Heart left ventricle (tissue), 16 donors: ENCODE measurements at regions of chr10 and their contacts with region 1.

Region 1: GRCh38 chr10:101341438-101341837 is 12.5 kb upstream of the BTRC start:
- DNase-seq: no peak
- ATAC-seq: no peak
- H3K4me3 ChIP-seq: no peak overlapping the region
- H3K27ac ChIP-seq: no peak overlapping the region
- H3K4me1 ChIP-seq: no peaks in the 10 kb centered on the region
- H3K27me3 ChIP-seq: peaks cover 0 to 3% (median 0%) of the 10 kb centered on the region in 9 donors
- CTCF ChIP-seq: no peak
- POLR2A ChIP-seq: no peak

Region 2: GRCh38 chr10:101367569-101368453 is 26.4 kb after region 1 on chr10:
- intact Hi-C with region 1: loop called in 1 of 10 experiments (anchors 2 kb)
- DNase-seq: no peak
- ATAC-seq: peak in 1 of 4 donors; percentile 39
- H3K4me3 ChIP-seq: no peak overlapping the region
- H3K27ac ChIP-seq: no peak overlapping the region
- H3K4me1 ChIP-seq: peaks cover 0 to 29% (median 12%) of the 10 kb centered on the region in 12 donors
- H3K27me3 ChIP-seq: no peaks in the 10 kb centered on the region
- CTCF ChIP-seq: no peak
- POLR2A ChIP-seq: no peak

Region 3: DNA sequence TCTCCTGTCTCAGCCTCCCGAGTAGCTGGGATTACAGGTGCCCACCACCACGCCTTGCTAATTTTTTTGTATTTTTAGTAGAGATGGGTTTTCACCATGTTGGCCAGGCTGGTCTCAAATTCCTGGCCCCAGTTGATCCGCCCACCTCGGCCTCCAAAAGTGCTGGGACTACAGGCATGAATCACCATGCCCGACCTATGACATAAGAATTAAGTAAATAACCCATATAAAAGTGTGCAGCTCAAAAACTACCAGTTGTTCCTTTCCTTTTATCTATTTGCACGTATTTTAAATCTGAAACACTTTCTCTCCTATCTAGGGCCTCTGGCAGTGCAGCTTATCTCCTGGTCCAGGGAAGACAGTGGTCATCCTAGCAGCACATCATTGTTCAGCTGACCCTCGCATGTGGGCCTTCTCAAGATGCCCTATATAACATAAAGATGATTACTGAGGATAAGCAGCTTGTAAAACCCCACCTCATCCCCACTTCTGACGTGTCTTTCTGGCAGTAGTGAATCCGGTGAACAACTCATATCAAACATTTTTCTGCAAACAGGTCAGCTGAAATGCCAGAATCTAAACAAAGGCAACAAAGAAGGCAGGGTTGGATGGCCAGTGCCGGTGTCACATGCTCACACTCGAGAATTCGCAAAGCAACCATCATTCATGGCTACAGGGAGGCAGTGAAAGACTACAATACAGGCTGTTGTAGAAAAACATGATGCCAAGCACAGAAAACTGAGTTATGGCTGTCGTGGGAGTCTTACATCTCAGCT is 538.2 kb after region 1 on chr10:
- intact Hi-C with region 1: no loop called
- DNase-seq: no peak
- ATAC-seq: no peak
- H3K4me3 ChIP-seq: no peak overlapping the region
- H3K27ac ChIP-seq: no peak overlapping the region
- H3K4me1 ChIP-seq: peaks cover 0 to 30% (median 6%) of the 10 kb centered on the region in 12 donors
- H3K27me3 ChIP-seq: no peaks in the 10 kb centered on the region
- CTCF ChIP-seq: no peak
- POLR2A ChIP-seq: no peak